ENCODE measurements at regions of chr4 and their contacts with region 1.

Region 1: GRCh38 chr4:73729534-73730165 is 10.7 kb upstream of the CXCL8 start:
- DNase-seq: peak in 4 of 5 donors; percentile 46 to 70 (median 62)
- ATAC-seq: peak; percentile 80 to 93 (median 88)
- H3K4me3 ChIP-seq: no peak overlapping the region
- H3K27ac ChIP-seq: peak overlapping the region in 1 of 12 donors; percentile 6
- H3K4me1 ChIP-seq: peaks cover 0 to 67% (median 17%) of the 10 kb centered on the region in 12 donors
- H3K27me3 ChIP-seq: no peaks in the 10 kb centered on the region
- CTCF ChIP-seq: peak; percentile 71 to 90 (median 81)
- POLR2A ChIP-seq: no peak

Region 2: DNA sequence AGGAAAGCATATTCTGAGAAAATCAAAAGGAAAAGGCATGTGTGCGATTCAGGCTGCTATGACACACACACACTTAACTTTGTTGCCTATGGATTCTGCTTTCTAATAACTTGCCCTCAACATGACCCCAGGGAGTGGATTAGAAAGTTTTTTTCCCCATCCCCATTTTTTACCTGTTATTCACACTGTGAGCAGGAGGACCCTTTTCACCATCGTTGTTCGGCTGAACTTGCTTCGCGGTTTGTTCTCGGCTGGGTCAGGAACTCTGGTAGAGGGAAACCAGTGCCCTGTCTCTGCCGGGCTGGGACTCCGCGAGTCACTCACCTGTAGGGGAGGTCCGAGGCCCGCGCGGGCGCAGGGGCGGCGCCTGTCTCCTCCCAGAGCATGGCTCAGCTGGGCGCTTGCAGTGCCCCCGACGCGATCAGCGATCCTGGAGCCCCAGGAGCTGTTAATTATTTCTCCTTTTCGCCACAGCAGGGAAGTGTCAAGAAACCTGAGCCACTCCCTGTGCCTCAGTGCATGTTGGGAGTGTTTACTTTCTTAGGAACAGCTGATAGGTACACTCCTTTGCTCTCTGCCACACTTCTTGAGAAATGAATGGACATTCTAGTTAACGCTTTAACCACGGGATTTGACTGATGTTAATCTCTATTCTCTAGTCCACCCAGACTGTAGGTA is 109.4 kb before region 1 on chr4 and contains the start of gene RASSF6:
- intact Hi-C with region 1: no loop called
- DNase-seq: no peak
- ATAC-seq: peak in 2 of 4 donors; percentile 33 to 36
- H3K4me3 ChIP-seq: no peak within 1 kb of the TSS
- H3K27ac ChIP-seq: no peak within 1 kb of the TSS
- H3K4me1 ChIP-seq: peaks cover 0 to 6% (median 0%) of the 10 kb centered on the region in 12 donors
- H3K27me3 ChIP-seq: peaks cover 0 to 24% (median 7%) of the 10 kb centered on the region in 9 donors
- CTCF ChIP-seq: no peak
- POLR2A ChIP-seq: no peak
- total RNA-seq, gene RASSF6: 0.11 TPM in 1 of 9 donors, not detected in the others

Region 3: DNA sequence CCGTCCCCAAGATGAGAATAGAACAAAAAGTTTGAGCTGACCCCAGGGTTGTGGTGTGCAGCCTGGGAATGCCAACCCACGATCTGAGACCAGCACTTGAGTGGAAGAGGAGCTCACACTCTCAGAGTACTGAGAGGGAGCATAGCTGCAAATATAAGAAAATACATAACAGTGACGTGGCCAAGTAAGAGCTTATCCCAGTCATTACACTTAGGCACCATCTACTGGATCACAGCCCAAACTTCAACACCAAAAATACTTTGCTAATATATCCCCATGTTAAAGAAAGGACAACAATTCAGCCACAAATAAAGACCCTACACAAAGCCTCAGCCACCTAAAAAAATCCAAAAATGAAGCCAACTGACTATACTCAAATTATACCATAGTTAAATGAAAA is 73.6 kb after region 1 on chr4:
- intact Hi-C with region 1: no loop called
- DNase-seq: no peak
- ATAC-seq: no peak
- H3K4me3 ChIP-seq: no peak overlapping the region
- H3K27ac ChIP-seq: no peak overlapping the region
- H3K4me1 ChIP-seq: no peaks in the 10 kb centered on the region
- H3K27me3 ChIP-seq: no peaks in the 10 kb centered on the region
- CTCF ChIP-seq: no peak
- POLR2A ChIP-seq: no peak

Region 4: GRCh38 chr4:73869130-73870050 is 139.7 kb after region 1 on chr4 and contains the start of gene CXCL1:
- intact Hi-C with region 1: loop called in 1 of 10 experiments (anchors 5 kb)
- DNase-seq: peak; percentile 23 to 71 (median 59)
- ATAC-seq: peak; percentile 45 to 80 (median 74)
- H3K4me3 ChIP-seq: peak within 1 kb of the TSS; percentile 51 to 80 (median 64)
- H3K27ac ChIP-seq: peak within 1 kb of the TSS in 11 of 12 donors; percentile 32 to 75 (median 59)
- H3K4me1 ChIP-seq: peaks cover 0 to 23% (median 5%) of the 10 kb centered on the region in 12 donors
- H3K27me3 ChIP-seq: peaks cover 0 to 21% (median 0%) of the 10 kb centered on the region in 9 donors
- CTCF ChIP-seq: peak in 1 of 12 donors; percentile 11
- POLR2A ChIP-seq: no peak
- total RNA-seq, gene CXCL1: 0.26 to 14.9 (median 1.5) TPM in 8 of 9 donors, not detected in the other

Region 5: GRCh38 chr4:73922766-73923630 is 193.3 kb after region 1 on chr4:
- intact Hi-C with region 1: loop called in 7 of 10 experiments (anchors 5 to 10 kb)
- DNase-seq: no peak
- ATAC-seq: no peak
- H3K4me3 ChIP-seq: no peak overlapping the region
- H3K27ac ChIP-seq: no peak overlapping the region
- H3K4me1 ChIP-seq: peaks cover 0 to 6% (median 0%) of the 10 kb centered on the region in 12 donors
- H3K27me3 ChIP-seq: peaks cover 0 to 7% (median 0%) of the 10 kb centered on the region in 9 donors
- CTCF ChIP-seq: peak in 9 of 12 donors; percentile 19 to 54 (median 45)
- POLR2A ChIP-seq: no peak

Measured in heart left ventricle (tissue), 16 donors.